Left cardiac atrium (tissue), 4 donors: ENCODE measurements at regions of chr2 and their contacts with region 1.

Region 1: GRCh38 chr2:188524519-188525113 is 232.9 kb downstream of the GULP1 start:
- DNase-seq: peak; percentile 19
- ATAC-seq: peak in 1 of 2 donors; percentile 44

Region 2: DNA sequence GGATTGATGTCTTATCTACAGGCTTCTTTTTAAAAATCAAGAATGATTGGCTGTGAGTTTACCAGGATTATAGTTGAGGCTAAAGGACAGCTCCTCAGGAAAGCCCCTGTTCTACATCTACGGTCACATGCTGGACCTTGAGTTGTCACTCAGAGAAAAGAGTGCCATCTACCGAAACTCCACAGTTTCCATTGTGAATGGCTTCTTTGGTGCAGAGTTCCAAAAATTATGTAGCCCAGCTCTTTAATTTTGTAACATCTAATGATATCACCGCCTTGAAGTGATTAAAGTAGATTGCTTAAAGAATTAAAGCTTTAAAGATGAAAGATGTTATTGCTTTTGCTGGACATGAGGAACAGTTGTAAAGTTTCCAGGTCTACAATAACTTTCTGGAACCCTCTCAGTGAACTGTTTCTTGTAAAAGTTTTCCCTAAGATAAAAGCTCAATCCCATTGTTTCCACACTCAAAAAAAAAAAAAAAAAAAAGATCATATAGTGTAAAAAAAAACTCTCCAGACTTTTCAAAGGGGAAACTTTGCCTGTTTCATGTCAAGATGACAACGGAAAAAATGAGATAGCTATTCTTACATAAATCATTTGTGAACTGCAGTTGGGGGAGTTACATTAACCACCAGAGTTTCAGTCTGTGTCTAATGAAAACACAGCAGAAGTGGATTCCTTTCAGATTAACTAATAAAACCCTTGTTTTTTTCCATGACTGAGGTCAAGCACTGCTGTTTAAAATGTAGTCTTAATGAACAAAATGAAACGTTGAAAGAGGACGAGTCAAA is 453.9 kb after region 1 on chr2:
- intact Hi-C with region 1: loop called in 1 of 2 experiments (anchors 5 kb)
- DNase-seq: no peak
- ATAC-seq: peak; percentile 35 to 56

Region 3: GRCh38 chr2:189412330-189412953 is 887.8 kb after region 1 on chr2:
- intact Hi-C with region 1: loop called (anchors 5 kb)
- DNase-seq: no peak
- ATAC-seq: peak; percentile 71 to 78